ENCODE measurements at regions of chr2 and their contacts with region 1.

Region 1: DNA sequence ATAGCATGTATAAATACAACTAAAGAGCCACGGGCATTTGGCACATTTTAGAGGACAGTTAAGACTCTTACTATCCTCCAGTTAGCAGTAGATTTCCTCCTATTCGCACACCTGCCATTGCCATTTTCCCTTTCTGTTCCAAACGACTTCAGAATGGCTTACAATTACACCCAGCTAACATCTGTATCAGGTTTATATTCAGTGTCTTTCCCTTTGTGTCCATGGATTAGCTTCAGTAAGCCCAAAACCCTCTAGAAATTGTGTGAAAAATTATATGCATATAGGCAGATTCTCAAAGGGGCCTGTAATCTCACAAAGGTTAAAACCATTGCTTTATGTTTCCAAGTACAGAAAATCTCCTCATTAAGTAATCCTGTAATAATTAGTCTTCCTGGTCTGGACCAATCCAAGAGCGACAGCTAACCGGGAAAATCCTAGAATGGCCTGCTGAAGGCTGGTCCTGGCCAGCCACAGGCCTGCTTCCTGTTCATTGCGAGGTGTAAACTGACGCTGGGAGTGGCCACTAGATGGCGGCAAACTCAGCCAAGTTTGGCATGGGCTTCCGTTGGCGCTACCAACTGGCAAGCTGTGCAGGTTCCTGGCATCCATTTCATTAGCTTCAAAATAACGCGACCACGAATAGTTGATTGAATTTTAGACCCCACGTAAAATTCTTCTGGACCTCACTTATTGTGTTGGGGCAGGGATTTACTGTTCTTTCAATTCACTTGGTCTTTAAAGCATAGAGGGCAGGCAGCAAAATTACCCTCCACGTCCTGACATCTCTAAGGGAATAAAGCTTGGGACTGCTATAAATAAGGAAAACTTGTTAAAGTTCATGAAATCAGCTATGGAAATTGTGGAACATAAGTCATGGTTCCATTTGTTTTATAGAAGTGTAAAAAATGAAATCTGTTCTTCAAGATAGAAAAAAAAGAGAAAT is 17.1 kb downstream of the ARHGAP25 start:
- DNase-seq: peak; percentile 93
- ATAC-seq: peak; percentile 95
- H3K4me3 ChIP-seq: peak overlapping the region in 3 of 5 experiments; percentile 8 to 51 (median 14)
- H3K4me3 Mint-ChIP-seq: peak overlapping the region; percentile 60
- H3K27ac ChIP-seq: peak overlapping the region; percentile 14 to 49
- H3K27ac Mint-ChIP-seq: peak overlapping the region; percentile 86
- H3K4me1 ChIP-seq: peaks cover 58 to 63% of the 10 kb centered on the region in 2 donors
- H3K4me1 Mint-ChIP-seq: peaks cover 75% of the 10 kb centered on the region
- H3K27me3 ChIP-seq: no peaks in the 10 kb centered on the region
- H3K27me3 Mint-ChIP-seq: no peaks in the 10 kb centered on the region
- CTCF ChIP-seq: peak; percentile 96

Region 2: DNA sequence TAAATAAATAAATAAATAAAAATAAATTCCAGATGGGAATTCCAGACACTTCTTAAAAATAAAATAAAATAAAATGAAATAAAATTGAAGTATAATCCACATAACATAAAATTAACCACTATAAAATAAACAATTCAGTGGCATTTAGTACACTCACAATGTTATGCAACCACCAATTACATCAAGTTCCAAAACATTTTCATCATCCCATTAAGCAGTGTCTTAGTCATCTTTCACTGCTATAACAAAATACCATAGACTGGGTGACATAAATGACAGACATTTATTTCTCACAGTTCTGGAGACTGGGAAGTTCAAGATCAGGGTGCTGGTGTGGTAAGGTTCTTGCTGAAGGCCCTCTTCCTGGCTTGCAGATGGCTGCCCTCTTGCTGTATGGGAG is 130.9 kb before region 1 on chr2:
- CTCF ChIA-PET with region 1: no interaction called
- POLR2A ChIA-PET with region 1: no interaction called
- intact Hi-C with region 1: no loop called
- DNase-seq: no peak
- ATAC-seq: no peak
- H3K4me3 ChIP-seq: no peak overlapping the region
- H3K4me3 Mint-ChIP-seq: no peak overlapping the region
- H3K27ac ChIP-seq: no peak overlapping the region
- H3K27ac Mint-ChIP-seq: no peak overlapping the region
- H3K4me1 ChIP-seq: no peaks in the 10 kb centered on the region
- H3K4me1 Mint-ChIP-seq: no peaks in the 10 kb centered on the region
- H3K27me3 ChIP-seq: no peaks in the 10 kb centered on the region
- H3K27me3 Mint-ChIP-seq: no peaks in the 10 kb centered on the region
- CTCF ChIP-seq: no peak

Region 3: DNA sequence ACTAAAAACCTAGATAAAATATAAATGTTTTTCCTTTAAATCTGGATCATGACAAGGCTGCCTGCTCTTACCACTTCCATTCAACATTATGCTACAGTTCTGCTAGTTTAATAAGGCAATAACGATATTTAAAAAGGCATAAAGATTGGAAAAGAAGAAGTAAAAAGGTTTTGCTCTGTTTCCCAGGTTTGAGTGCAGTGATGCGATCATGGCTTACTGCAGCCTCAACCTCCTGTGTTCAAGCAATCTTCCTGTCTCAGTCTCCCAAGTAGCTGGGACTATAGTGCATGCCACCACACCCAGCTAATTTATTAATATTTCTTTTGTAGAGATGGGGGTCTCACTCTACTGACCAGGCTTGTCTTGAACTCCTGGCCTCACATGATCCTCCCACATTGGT is 67.5 kb before region 1 on chr2:
- CTCF ChIA-PET with region 1: no interaction called
- POLR2A ChIA-PET with region 1: no interaction called
- intact Hi-C with region 1: no loop called
- DNase-seq: peak; percentile 28
- ATAC-seq: peak; percentile 28
- H3K4me3 ChIP-seq: no peak overlapping the region
- H3K4me3 Mint-ChIP-seq: no peak overlapping the region
- H3K27ac ChIP-seq: no peak overlapping the region
- H3K27ac Mint-ChIP-seq: no peak overlapping the region
- H3K4me1 ChIP-seq: peaks cover 14 to 16% of the 10 kb centered on the region in 2 donors
- H3K4me1 Mint-ChIP-seq: peaks cover 15% of the 10 kb centered on the region
- H3K27me3 ChIP-seq: no peaks in the 10 kb centered on the region
- H3K27me3 Mint-ChIP-seq: no peaks in the 10 kb centered on the region
- CTCF ChIP-seq: no peak

Region 4: GRCh38 chr2:68721482-68722101 is 30.1 kb before region 1 on chr2:
- CTCF ChIA-PET with region 1: interaction called, 280 read pairs
- POLR2A ChIA-PET with region 1: interaction called, 4 read pairs
- intact Hi-C with region 1: loop called (anchors 5 kb)
- DNase-seq: peak; percentile 85
- ATAC-seq: peak; percentile 88
- H3K4me3 ChIP-seq: peak overlapping the region in 3 of 5 experiments; percentile 1 to 14 (median 3)
- H3K4me3 Mint-ChIP-seq: peak overlapping the region; percentile 82
- H3K27ac ChIP-seq: peak overlapping the region; percentile 66 to 81
- H3K27ac Mint-ChIP-seq: peak overlapping the region; percentile 89
- H3K4me1 ChIP-seq: peaks cover 41 to 56% of the 10 kb centered on the region in 2 donors
- H3K4me1 Mint-ChIP-seq: peaks cover 65% of the 10 kb centered on the region
- H3K27me3 ChIP-seq: no peaks in the 10 kb centered on the region
- H3K27me3 Mint-ChIP-seq: no peaks in the 10 kb centered on the region
- CTCF ChIP-seq: no peak

Region 5: DNA sequence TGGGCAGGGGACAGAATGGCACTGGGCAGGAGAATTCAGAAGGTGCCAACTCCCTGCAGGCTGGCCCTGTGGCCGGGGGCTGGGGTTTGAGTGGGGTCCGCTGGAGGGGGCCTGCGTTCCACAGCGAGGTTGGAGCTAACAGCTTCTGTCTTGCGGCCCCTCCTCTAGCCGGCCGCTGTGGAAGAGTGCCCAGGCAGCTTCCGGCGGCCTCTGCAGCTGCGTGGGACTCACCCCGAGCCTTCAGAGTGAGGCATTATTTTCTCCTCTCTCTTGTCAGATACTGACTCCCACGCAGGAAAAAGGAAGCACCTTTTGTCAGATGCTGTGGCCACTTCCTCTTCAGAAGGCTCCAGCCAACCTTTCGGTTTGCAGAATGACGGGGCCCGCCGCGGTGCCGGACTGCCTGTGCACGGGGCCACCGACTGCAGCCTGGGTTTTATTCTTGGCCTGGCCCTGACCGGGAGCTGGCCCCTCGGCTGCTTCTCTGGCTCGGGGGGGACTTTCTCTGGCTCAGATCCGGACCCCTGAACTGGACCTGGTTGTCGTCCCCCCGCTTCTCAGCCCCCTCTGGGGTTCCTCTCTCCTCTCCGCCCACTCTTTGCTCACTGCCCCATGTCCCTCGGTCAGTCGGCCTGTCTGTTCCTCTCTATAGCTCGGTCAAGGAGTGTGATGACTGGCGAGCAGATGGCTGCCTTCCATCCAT is 23.1 kb after region 1 on chr2:
- CTCF ChIA-PET with region 1: interaction called, 425 read pairs
- POLR2A ChIA-PET with region 1: interaction called, 6 read pairs
- intact Hi-C with region 1: loop called (anchors 1 kb)
- DNase-seq: peak; percentile 91
- ATAC-seq: peak; percentile 80
- H3K4me3 ChIP-seq: peak overlapping the region; percentile 79 to 96 (median 91)
- H3K4me3 Mint-ChIP-seq: peak overlapping the region; percentile 99
- H3K27ac ChIP-seq: peak overlapping the region; percentile 93 to 99
- H3K27ac Mint-ChIP-seq: peak overlapping the region; percentile 98
- H3K4me1 ChIP-seq: peaks cover 83 to 88% of the 10 kb centered on the region in 2 donors
- H3K4me1 Mint-ChIP-seq: peaks cover 80% of the 10 kb centered on the region
- H3K27me3 ChIP-seq: no peaks in the 10 kb centered on the region
- H3K27me3 Mint-ChIP-seq: no peaks in the 10 kb centered on the region
- CTCF ChIP-seq: no peak

Region 6: GRCh38 chr2:68807821-68808266 is 56.2 kb after region 1 on chr2:
- CTCF ChIA-PET with region 1: interaction called, 12 read pairs
- POLR2A ChIA-PET with region 1: no interaction called
- intact Hi-C with region 1: loop called (anchors 2 kb)
- DNase-seq: no peak
- ATAC-seq: no peak
- H3K4me3 ChIP-seq: no peak overlapping the region
- H3K4me3 Mint-ChIP-seq: no peak overlapping the region
- H3K27ac ChIP-seq: peak overlapping the region; percentile 23 to 84
- H3K27ac Mint-ChIP-seq: peak overlapping the region; percentile 89
- H3K4me1 ChIP-seq: peaks cover 28 to 29% of the 10 kb centered on the region in 2 donors
- H3K4me1 Mint-ChIP-seq: peaks cover 61% of the 10 kb centered on the region
- H3K27me3 ChIP-seq: no peaks in the 10 kb centered on the region
- H3K27me3 Mint-ChIP-seq: no peaks in the 10 kb centered on the region
- CTCF ChIP-seq: no peak

Region 7: GRCh38 chr2:68837164-68837860 is 85.6 kb after region 1 on chr2:
- CTCF ChIA-PET with region 1: interaction called, 140 read pairs
- POLR2A ChIA-PET with region 1: interaction called, 7 read pairs
- intact Hi-C with region 1: loop called (anchors 1 kb)
- DNase-seq: peak; percentile 78
- ATAC-seq: peak; percentile 46
- H3K4me3 ChIP-seq: peak overlapping the region in 1 of 5 experiments; percentile 8
- H3K4me3 Mint-ChIP-seq: peak overlapping the region; percentile 26
- H3K27ac ChIP-seq: no peak overlapping the region
- H3K27ac Mint-ChIP-seq: peak overlapping the region; percentile 75
- H3K4me1 ChIP-seq: peaks cover 42 to 47% of the 10 kb centered on the region in 2 donors
- H3K4me1 Mint-ChIP-seq: peaks cover 54% of the 10 kb centered on the region
- H3K27me3 ChIP-seq: no peaks in the 10 kb centered on the region
- H3K27me3 Mint-ChIP-seq: no peaks in the 10 kb centered on the region
- CTCF ChIP-seq: peak; percentile 82

Region 8: DNA sequence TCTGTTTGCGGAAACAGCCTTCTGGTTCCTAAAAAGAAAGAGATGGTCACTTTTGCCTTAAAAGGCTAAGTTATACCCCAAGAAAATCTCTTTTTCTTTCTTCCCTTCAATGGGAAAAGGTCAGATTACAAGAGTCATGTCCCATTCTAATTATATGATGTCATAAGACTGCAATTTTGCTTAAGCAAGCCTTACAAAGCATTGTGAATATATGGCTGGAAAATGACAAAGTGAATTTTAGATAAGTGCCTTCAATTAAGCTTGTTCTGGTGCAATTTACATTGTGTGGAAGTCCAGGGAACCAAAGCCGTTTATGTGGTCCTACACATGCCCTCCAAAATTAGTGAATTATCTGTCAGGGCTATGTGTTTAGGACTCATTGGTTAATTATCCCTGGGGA is 127.1 kb after region 1 on chr2:
- CTCF ChIA-PET with region 1: no interaction called
- POLR2A ChIA-PET with region 1: no interaction called
- intact Hi-C with region 1: no loop called
- DNase-seq: no peak
- ATAC-seq: no peak
- H3K4me3 ChIP-seq: no peak overlapping the region
- H3K4me3 Mint-ChIP-seq: no peak overlapping the region
- H3K27ac ChIP-seq: no peak overlapping the region
- H3K27ac Mint-ChIP-seq: no peak overlapping the region
- H3K4me1 ChIP-seq: no peaks in the 10 kb centered on the region
- H3K4me1 Mint-ChIP-seq: no peaks in the 10 kb centered on the region
- H3K27me3 ChIP-seq: peaks cover 0 to 9% (median 0%) of the 10 kb centered on the region in 4 experiments
- H3K27me3 Mint-ChIP-seq: peaks cover 25% of the 10 kb centered on the region
- CTCF ChIP-seq: no peak

Measured in B cell (primary cell).